ENCODE measurements at regions of chr11 and their contacts with region 1.

Region 1: DNA sequence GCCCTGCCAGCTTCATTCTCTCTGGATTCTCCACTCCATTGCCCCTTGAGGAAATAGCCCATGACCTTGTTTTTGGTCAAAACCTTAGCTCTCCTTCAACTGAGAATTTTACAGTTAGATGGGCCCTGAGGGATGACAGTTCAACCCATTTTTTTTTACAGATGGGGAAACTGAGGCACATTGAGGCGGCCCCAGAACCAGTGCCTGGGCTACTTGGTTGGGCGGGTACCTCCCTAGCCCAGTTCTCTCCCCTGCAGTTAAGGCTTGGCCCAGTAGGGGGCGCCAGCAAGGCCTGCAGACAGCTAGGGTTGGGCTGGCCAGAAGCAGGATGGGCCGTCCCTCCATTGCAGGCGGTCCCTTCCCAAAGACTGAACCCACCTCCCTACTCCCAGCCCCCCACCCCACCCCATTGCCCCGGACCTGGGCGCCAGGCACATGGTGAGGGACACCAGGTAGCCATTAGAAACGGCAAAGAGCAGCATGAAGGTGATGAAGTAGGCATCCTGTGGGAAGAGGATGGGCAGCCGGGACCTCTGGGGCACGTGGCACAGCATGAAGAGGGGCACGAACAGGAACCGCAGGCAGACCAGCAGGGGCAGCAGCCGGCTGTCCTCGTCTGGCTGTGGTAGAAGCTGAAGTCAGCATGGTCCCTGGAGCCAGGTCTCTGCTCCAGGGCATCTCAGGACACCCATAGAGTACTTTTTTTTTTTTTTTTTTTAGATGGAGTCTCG is 7.6 kb downstream of the SLC29A2 start:
- DNase-seq: no peak
- H3K4me3 ChIP-seq: no peak overlapping the region
- H3K27ac ChIP-seq: no peak overlapping the region
- H3K4me1 ChIP-seq: no peaks in the 10 kb centered on the region
- H3K27me3 ChIP-seq: no peaks in the 10 kb centered on the region
- CTCF ChIP-seq: peak; percentile 67 to 81
- POLR2A ChIP-seq: no peak

Region 2: GRCh38 chr11:66344550-66345315 is 19.2 kb before region 1 on chr11 and contains the start of gene BRMS1:
- CTCF ChIA-PET with region 1: interaction called, 12 read pairs
- POLR2A ChIA-PET with region 1: no interaction called
- dilution Hi-C with region 1: no loop called
- intact Hi-C with region 1: no loop called
- DNase-seq: peak; percentile 96
- H3K4me3 ChIP-seq: peak within 1 kb of the TSS; percentile 61 to 98 (median 82)
- H3K27ac ChIP-seq: peak within 1 kb of the TSS; percentile 62
- H3K4me1 ChIP-seq: peaks cover 14% of the 10 kb centered on the region
- H3K27me3 ChIP-seq: no peaks in the 10 kb centered on the region
- CTCF ChIP-seq: no peak
- POLR2A ChIP-seq: peak; percentile 97
- total RNA-seq, gene BRMS1: 51.1 and 53.1 TPM in 2 replicates